Psoas muscle (tissue), 8 donors: ENCODE measurements at regions of chr7 and their contacts with region 1.

Region 1: DNA sequence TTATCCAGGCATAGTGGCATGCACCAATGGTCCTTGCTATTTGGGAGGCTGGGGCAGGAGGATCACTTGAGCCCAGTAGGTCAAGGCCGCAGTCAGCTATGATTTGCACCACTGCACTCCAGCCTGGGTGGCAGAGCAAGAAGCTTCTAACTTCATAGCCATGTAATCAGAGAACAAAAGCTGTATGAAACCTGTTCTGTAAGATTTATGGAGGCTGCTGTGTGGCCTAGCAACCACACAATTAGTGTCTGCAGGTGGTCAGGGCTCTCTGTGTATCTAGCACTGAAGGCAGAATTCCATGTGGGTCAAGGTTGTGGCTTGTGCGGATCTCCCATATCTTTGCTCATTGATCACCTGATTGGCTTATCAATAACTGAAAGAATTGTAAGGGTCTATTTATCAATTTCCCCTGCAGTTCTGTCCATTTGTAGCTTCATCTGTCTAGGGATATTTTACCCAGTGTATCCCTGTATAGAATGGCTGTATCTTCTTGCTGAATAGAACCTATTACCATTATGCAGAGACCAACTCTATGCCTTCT is 221.4 kb upstream of the FOXK1 start:
- DNase-seq: no peak
- ATAC-seq: no peak
- H3K4me3 ChIP-seq: no peak overlapping the region
- H3K27ac ChIP-seq: no peak overlapping the region
- H3K4me1 ChIP-seq: no peaks in the 10 kb centered on the region
- H3K27me3 ChIP-seq: no peaks in the 10 kb centered on the region
- CTCF ChIP-seq: no peak

Region 2: GRCh38 chr7:4169455-4169854 is 291.2 kb before region 1 on chr7:
- intact Hi-C with region 1: loop called in 1 of 2 experiments (anchors 10 kb)
- DNase-seq: no peak
- ATAC-seq: no peak
- H3K4me3 ChIP-seq: no peak overlapping the region
- H3K27ac ChIP-seq: no peak overlapping the region
- H3K4me1 ChIP-seq: no peaks in the 10 kb centered on the region
- H3K27me3 ChIP-seq: no peaks in the 10 kb centered on the region
- CTCF ChIP-seq: no peak